Thyroid gland (tissue), 4 donors: ENCODE measurements at regions of chr11 and their contacts with region 1.

Region 1: GRCh38 chr11:12893787-12894672 is 115.1 kb upstream of the RASSF10 start:
- DNase-seq: peak; percentile 63 to 72
- H3K4me3 ChIP-seq: no peak overlapping the region
- H3K27ac ChIP-seq: peak overlapping the region in 2 of 3 donors; percentile 3 to 54
- H3K4me1 ChIP-seq: peaks cover 0 to 4% of the 10 kb centered on the region in 2 donors
- H3K27me3 ChIP-seq: no peaks in the 10 kb centered on the region
- CTCF ChIP-seq: peak; percentile 76 to 89 (median 83)
- POLR2A ChIP-seq: no peak

Region 2: GRCh38 chr11:12331239-12331874 is 562.7 kb before region 1 on chr11:
- intact Hi-C with region 1: loop called (anchors 5 kb)
- DNase-seq: peak; percentile 85 to 90
- H3K4me3 ChIP-seq: no peak overlapping the region
- H3K27ac ChIP-seq: no peak overlapping the region
- H3K4me1 ChIP-seq: no peaks in the 10 kb centered on the region
- H3K27me3 ChIP-seq: no peaks in the 10 kb centered on the region
- CTCF ChIP-seq: peak; percentile 23 to 85 (median 79)
- POLR2A ChIP-seq: no peak

Region 3: DNA sequence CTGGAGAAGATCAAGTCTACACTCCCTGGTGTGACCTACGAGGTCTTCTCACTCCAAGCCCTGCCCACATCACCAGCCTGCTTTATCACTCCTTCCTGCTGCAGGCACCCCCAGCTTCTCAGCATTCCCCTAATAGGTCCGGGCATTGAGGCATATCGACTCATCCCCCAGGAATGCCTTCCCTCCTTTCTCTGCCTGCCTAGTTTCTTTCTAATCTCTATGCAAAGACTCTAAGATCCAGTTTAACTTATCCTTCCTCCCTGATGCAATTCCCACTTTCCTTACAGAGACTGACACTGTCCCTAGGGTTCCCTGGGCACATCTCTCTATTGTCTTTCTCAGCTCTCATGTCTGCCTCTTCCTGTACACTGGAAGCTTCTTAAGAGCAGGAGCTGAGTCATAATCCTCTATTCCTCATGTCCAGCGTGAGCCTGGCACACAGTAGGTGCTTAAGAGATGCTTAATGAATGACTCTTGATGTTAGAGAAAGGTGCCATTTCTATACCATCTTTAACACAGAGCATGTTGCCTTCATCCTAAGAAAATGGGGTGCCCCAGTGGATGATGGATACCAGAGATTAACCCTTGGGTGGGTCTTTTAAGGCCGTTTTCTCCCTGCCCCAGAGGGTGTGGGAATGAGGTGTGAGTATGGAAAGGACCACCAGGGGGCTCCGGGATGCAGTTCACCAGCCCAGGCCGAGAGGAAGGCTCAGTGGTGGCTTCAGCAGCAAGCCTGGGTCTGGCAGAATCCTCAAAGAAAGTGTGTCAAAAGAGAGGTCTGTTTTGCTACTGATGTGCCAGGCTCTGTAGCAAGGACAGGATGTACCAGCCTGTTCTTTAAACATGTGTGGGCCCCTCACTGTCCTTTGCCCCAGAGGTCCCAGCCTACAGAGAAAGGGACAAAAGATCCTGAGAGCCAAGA is 482.0 kb before region 1 on chr11:
- intact Hi-C with region 1: loop called (anchors 10 kb)
- DNase-seq: peak; percentile 60 to 64
- H3K4me3 ChIP-seq: no peak overlapping the region
- H3K27ac ChIP-seq: no peak overlapping the region
- H3K4me1 ChIP-seq: peaks cover 0 to 13% of the 10 kb centered on the region in 2 donors
- H3K27me3 ChIP-seq: no peaks in the 10 kb centered on the region
- CTCF ChIP-seq: peak; percentile 36 to 71 (median 58)
- POLR2A ChIP-seq: no peak

Region 4: DNA sequence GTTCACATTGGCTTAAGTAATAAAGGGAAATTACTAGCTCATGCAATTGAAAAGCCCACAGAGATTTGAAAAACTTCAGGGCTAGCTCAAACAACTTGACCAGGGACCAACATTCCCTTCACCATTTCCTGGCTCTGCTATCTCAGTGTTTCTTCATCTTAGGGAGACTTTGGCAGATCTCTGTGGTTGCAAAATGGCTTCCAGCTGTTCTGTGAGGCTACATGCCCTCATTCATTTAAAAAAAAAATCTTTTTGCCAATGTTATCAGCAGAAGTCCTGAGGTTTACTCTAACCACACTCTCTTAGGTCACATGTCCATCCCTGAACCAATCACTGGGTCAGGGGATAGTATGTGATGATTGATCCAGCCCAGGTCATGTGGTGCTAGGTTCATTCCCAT is 101.2 kb after region 1 on chr11:
- intact Hi-C with region 1: no loop called
- DNase-seq: no peak
- H3K4me3 ChIP-seq: no peak overlapping the region
- H3K27ac ChIP-seq: no peak overlapping the region
- H3K4me1 ChIP-seq: no peaks in the 10 kb centered on the region
- H3K27me3 ChIP-seq: no peaks in the 10 kb centered on the region
- CTCF ChIP-seq: no peak
- POLR2A ChIP-seq: no peak

Region 5: GRCh38 chr11:13076966-13077365 is 182.9 kb after region 1 on chr11:
- intact Hi-C with region 1: no loop called
- DNase-seq: no peak
- H3K4me3 ChIP-seq: no peak overlapping the region
- H3K27ac ChIP-seq: no peak overlapping the region
- H3K4me1 ChIP-seq: no peaks in the 10 kb centered on the region
- H3K27me3 ChIP-seq: no peaks in the 10 kb centered on the region
- CTCF ChIP-seq: no peak
- POLR2A ChIP-seq: no peak